Activated CD4-positive, alpha-beta T cell treated with anti-CD3 and anti-CD28 coated beads for 36 hours (primary cell): ENCODE measurements at regions of chr7 and their contacts with region 1.

Region 1: GRCh38 chr7:5557920-5558401 is 134.3 kb upstream of the TNRC18 start:
- DNase-seq: peak; percentile 45
- ATAC-seq: no peak
- H3K4me3 Mint-ChIP-seq: peak overlapping the region; percentile 65
- H3K27ac Mint-ChIP-seq: peak overlapping the region; percentile 88
- H3K4me1 Mint-ChIP-seq: peaks cover 39% of the 10 kb centered on the region
- H3K27me3 Mint-ChIP-seq: peaks cover 2% of the 10 kb centered on the region

Region 2: DNA sequence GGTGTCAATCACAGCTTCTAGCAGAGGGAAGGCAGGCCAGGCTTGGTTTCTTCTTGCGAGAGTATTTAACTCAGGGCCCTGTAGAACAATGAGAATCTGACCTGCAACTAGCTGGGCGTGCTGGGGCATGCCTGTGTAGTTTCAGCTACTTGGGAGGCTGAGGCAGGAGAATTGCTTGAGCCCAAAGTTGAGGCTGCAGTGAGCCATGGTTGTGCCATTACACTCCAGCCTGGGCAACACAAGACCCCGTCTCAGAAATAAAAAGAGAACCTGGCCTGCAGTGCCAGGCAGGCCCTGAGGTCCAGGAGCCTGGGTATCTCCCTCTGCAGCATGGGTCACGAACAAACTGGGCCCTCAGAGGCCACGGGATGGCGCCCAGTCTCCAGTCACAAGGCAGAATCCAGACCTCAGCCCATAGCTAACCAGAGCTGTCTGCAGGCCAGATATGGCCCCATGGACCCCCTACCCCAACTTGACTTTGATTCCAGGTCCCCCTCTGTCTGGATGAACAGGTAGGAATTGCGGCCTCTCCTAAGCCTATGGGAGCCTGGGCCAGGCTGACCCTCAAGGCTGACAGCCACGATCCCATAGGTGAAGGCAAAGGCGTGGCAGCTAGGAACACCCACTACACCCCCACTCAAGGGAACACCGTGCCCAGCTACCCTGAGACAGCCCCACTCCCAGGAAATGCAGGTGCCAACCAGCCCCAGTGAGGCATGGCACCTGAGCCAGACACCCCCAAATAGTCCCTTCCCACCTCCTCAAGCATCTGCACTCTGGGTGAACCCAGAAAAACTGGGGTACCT is 31.7 kb before region 1 on chr7:
- CTCF ChIA-PET with region 1: interaction called, 12 read pairs
- POLR2A ChIA-PET with region 1: interaction called, 3 read pairs
- intact Hi-C with region 1: no loop called
- DNase-seq: peak; percentile 61
- ATAC-seq: peak; percentile 1
- H3K4me3 Mint-ChIP-seq: peak overlapping the region; percentile 100
- H3K27ac Mint-ChIP-seq: peak overlapping the region; percentile 79
- H3K4me1 Mint-ChIP-seq: peaks cover 16% of the 10 kb centered on the region
- H3K27me3 Mint-ChIP-seq: no peaks in the 10 kb centered on the region